ENCODE measurements at regions of chr15 and their contacts with region 1.

Region 1: GRCh38 chr15:77186594-77187011 is 115.7 kb upstream of the TSPAN3 start:
- DNase-seq: peak; percentile 60
- ATAC-seq: no peak
- H3K4me3 ChIP-seq: no peak overlapping the region
- H3K4me3 Mint-ChIP-seq: no peak overlapping the region
- H3K27ac ChIP-seq: peak overlapping the region; percentile 79 to 80
- H3K27ac Mint-ChIP-seq: peak overlapping the region; percentile 53
- H3K4me1 ChIP-seq: peaks cover 76% of the 10 kb centered on the region in 2 donors
- H3K4me1 Mint-ChIP-seq: peaks cover 66% of the 10 kb centered on the region
- H3K27me3 ChIP-seq: no peaks in the 10 kb centered on the region
- H3K27me3 Mint-ChIP-seq: no peaks in the 10 kb centered on the region
- CTCF ChIP-seq: peak; percentile 76

Region 2: GRCh38 chr15:77083381-77084162 is 103.0 kb before region 1 on chr15:
- CTCF ChIA-PET with region 1: no interaction called
- POLR2A ChIA-PET with region 1: no interaction called
- intact Hi-C with region 1: loop called (anchors 5 kb)
- DNase-seq: peak; percentile 96
- ATAC-seq: peak; percentile 96
- H3K4me3 ChIP-seq: peak overlapping the region in 4 of 5 experiments; percentile 12 to 45 (median 26)
- H3K4me3 Mint-ChIP-seq: peak overlapping the region; percentile 60
- H3K27ac ChIP-seq: peak overlapping the region; percentile 80 to 92
- H3K27ac Mint-ChIP-seq: peak overlapping the region; percentile 89
- H3K4me1 ChIP-seq: peaks cover 48 to 57% of the 10 kb centered on the region in 2 donors
- H3K4me1 Mint-ChIP-seq: peaks cover 51% of the 10 kb centered on the region
- H3K27me3 ChIP-seq: no peaks in the 10 kb centered on the region
- H3K27me3 Mint-ChIP-seq: no peaks in the 10 kb centered on the region
- CTCF ChIP-seq: no peak

Region 3: GRCh38 chr15:78077058-78077877 is 890.7 kb after region 1 on chr15 and contains the start of gene TBC1D2B:
- CTCF ChIA-PET with region 1: no interaction called
- POLR2A ChIA-PET with region 1: no interaction called
- intact Hi-C with region 1: loop called (anchors 5 kb)
- DNase-seq: peak; percentile 76
- ATAC-seq: peak; percentile 94
- H3K4me3 ChIP-seq: peak within 1 kb of the TSS; percentile 76 to 89 (median 79)
- H3K4me3 Mint-ChIP-seq: peak within 1 kb of the TSS; percentile 93
- H3K27ac ChIP-seq: peak within 1 kb of the TSS in 1 of 2 donors; percentile 1
- H3K27ac Mint-ChIP-seq: peak within 1 kb of the TSS; percentile 89
- H3K4me1 ChIP-seq: peaks cover 17 to 22% of the 10 kb centered on the region in 2 donors
- H3K4me1 Mint-ChIP-seq: peaks cover 26% of the 10 kb centered on the region
- H3K27me3 ChIP-seq: no peaks in the 10 kb centered on the region
- H3K27me3 Mint-ChIP-seq: no peaks in the 10 kb centered on the region
- CTCF ChIP-seq: peak; percentile 12
- total RNA-seq, gene TBC1D2B: 26.1 and 29.8 TPM in 2 replicates